Caco-2 (cell line): ENCODE measurements at regions of chr3 and their contacts with region 1.

Region 1: GRCh38 chr3:124351430-124352148 is 359.7 kb upstream of the ROPN1 start:
- DNase-seq: peak; percentile 74 to 77
- H3K4me3 ChIP-seq: no peak overlapping the region
- H3K4me3 Mint-ChIP-seq: no peak overlapping the region
- H3K27ac Mint-ChIP-seq: peak overlapping the region; percentile 50
- H3K4me1 ChIP-seq: peaks cover 18% of the 10 kb centered on the region
- H3K4me1 Mint-ChIP-seq: peaks cover 24% of the 10 kb centered on the region
- H3K27me3 ChIP-seq: no peaks in the 10 kb centered on the region
- H3K27me3 Mint-ChIP-seq: no peaks in the 10 kb centered on the region
- CTCF ChIP-seq: peak; percentile 52 to 59

Region 2: GRCh38 chr3:124322309-124322880 is 29.2 kb before region 1 on chr3:
- CTCF ChIA-PET with region 1: no interaction called
- POLR2A ChIA-PET with region 1: no interaction called
- intact Hi-C with region 1: loop called (anchors 2 kb)
- DNase-seq: no peak
- H3K4me3 ChIP-seq: no peak overlapping the region
- H3K4me3 Mint-ChIP-seq: no peak overlapping the region
- H3K27ac Mint-ChIP-seq: no peak overlapping the region
- H3K4me1 ChIP-seq: 0 out of 2 replicates have a peak, but pooled peaks cover 3% of the 10 kb centered on the region
- H3K4me1 Mint-ChIP-seq: no peaks in the 10 kb centered on the region
- H3K27me3 ChIP-seq: no peaks in the 10 kb centered on the region
- H3K27me3 Mint-ChIP-seq: peaks cover 3% of the 10 kb centered on the region
- CTCF ChIP-seq: no peak

Region 3: DNA sequence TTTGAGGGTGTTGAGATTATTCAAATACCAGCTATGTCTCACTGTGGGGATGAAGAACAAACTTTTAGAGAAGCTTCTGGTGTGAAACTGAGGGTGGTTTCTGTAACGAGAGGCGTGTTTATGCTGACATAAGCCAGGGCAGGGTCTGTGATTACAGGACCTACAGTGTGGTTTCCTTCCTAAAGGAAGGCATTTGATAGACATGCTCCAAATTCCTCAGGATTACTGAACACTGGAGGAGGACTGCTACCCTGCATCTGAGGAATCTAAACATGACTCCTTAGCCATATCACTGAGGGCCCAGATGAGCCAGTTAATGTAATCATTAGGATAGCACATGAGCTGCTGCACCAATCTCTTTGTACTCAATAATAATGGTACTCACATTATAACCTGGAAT is 50.3 kb after region 1 on chr3:
- CTCF ChIA-PET with region 1: interaction called, 3 read pairs
- POLR2A ChIA-PET with region 1: no interaction called
- intact Hi-C with region 1: loop called (anchors 5 kb)
- DNase-seq: peak in 1 of 2 experiments; percentile 25
- H3K4me3 ChIP-seq: no peak overlapping the region
- H3K4me3 Mint-ChIP-seq: no peak overlapping the region
- H3K27ac Mint-ChIP-seq: no peak overlapping the region
- H3K4me1 ChIP-seq: peaks cover 10% of the 10 kb centered on the region
- H3K4me1 Mint-ChIP-seq: peaks cover 13% of the 10 kb centered on the region
- H3K27me3 ChIP-seq: no peaks in the 10 kb centered on the region
- H3K27me3 Mint-ChIP-seq: no peaks in the 10 kb centered on the region
- CTCF ChIP-seq: no peak

Region 4: GRCh38 chr3:124429129-124429815 is 77.7 kb after region 1 on chr3:
- CTCF ChIA-PET with region 1: interaction called, 14 read pairs
- POLR2A ChIA-PET with region 1: no interaction called
- intact Hi-C with region 1: loop called (anchors 1 kb)
- DNase-seq: no peak
- H3K4me3 ChIP-seq: no peak overlapping the region
- H3K4me3 Mint-ChIP-seq: no peak overlapping the region
- H3K27ac Mint-ChIP-seq: no peak overlapping the region
- H3K4me1 ChIP-seq: no peaks in the 10 kb centered on the region; the same call in 1 of the 2 replicates
- H3K4me1 Mint-ChIP-seq: no peaks in the 10 kb centered on the region
- H3K27me3 ChIP-seq: no peaks in the 10 kb centered on the region
- H3K27me3 Mint-ChIP-seq: peaks cover 9% of the 10 kb centered on the region
- CTCF ChIP-seq: no peak

Region 5: GRCh38 chr3:124463241-124463640 is 111.7 kb after region 1 on chr3:
- CTCF ChIA-PET with region 1: interaction called, 25 read pairs
- POLR2A ChIA-PET with region 1: no interaction called
- intact Hi-C with region 1: loop called (anchors 1 kb)
- DNase-seq: no peak
- H3K4me3 ChIP-seq: no peak overlapping the region
- H3K4me3 Mint-ChIP-seq: no peak overlapping the region
- H3K27ac Mint-ChIP-seq: no peak overlapping the region
- H3K4me1 ChIP-seq: peaks cover 4% of the 10 kb centered on the region; the same call in 1 of the 2 replicates
- H3K4me1 Mint-ChIP-seq: peaks cover 7% of the 10 kb centered on the region
- H3K27me3 ChIP-seq: no peaks in the 10 kb centered on the region
- H3K27me3 Mint-ChIP-seq: peaks cover 7% of the 10 kb centered on the region
- CTCF ChIP-seq: no peak

Region 6: DNA sequence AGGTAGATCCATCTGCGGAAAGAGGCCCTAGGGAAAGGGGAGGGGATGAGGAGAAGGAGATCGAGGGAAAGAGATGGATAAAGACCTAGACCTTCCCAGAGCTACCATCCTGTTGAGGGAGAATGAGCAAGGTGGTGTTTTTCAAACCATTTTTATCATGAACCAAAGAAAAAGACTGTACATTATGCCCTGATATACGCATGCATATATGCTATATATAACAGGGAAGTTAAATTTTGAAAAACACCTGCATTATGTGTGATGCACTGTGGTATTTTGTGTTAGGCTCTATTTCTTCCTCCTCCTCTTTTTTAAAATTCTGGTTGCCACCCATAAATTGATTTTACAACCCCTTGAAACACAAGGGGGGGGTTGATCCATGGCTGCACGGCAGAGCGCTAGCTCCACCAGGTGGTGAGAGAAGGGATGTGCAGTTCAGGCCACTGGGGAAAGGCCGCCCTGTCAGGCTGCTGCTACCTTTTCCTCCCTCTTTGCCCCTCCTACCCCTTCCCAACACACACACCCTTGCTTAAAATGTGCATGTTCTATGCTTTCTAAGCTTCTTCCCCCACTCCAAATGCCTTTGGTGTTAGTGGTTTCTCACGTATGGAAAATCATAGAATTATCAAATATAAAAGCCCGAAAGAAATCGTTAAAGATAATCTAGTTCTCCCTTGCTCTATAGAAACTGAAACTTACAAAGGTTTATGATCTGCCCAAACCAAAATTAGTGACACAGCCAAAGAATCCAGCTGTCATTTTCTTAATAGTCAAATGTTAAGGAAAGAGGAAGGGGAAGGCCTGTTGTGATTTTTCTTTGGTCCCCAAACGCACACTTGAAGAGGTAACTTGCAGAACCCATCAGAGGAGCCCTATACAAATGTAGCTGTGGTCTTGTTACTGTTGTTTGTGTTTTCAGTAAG is 116.7 kb after region 1 on chr3:
- CTCF ChIA-PET with region 1: interaction called, 25 read pairs
- POLR2A ChIA-PET with region 1: no interaction called
- intact Hi-C with region 1: loop called (anchors 1 kb)
- DNase-seq: peak; percentile 55 to 76
- H3K4me3 ChIP-seq: no peak overlapping the region
- H3K4me3 Mint-ChIP-seq: no peak overlapping the region
- H3K27ac Mint-ChIP-seq: no peak overlapping the region
- H3K4me1 ChIP-seq: peaks cover 7% of the 10 kb centered on the region; the same call in 1 of the 2 replicates
- H3K4me1 Mint-ChIP-seq: peaks cover 7% of the 10 kb centered on the region
- H3K27me3 ChIP-seq: no peaks in the 10 kb centered on the region
- H3K27me3 Mint-ChIP-seq: peaks cover 4% of the 10 kb centered on the region
- CTCF ChIP-seq: peak; percentile 97 to 98

Region 7: GRCh38 chr3:124552239-124552638 is 200.7 kb after region 1 on chr3:
- CTCF ChIA-PET with region 1: interaction called, 7 read pairs
- POLR2A ChIA-PET with region 1: no interaction called
- intact Hi-C with region 1: loop called (anchors 2 kb)
- DNase-seq: no peak
- H3K4me3 ChIP-seq: no peak overlapping the region
- H3K4me3 Mint-ChIP-seq: no peak overlapping the region
- H3K27ac Mint-ChIP-seq: no peak overlapping the region
- H3K4me1 ChIP-seq: no peaks in the 10 kb centered on the region
- H3K4me1 Mint-ChIP-seq: no peaks in the 10 kb centered on the region
- H3K27me3 ChIP-seq: no peaks in the 10 kb centered on the region
- H3K27me3 Mint-ChIP-seq: peaks cover 4% of the 10 kb centered on the region
- CTCF ChIP-seq: no peak

Region 8: GRCh38 chr3:124761250-124761796 is 409.7 kb after region 1 on chr3:
- CTCF ChIA-PET with region 1: no interaction called
- POLR2A ChIA-PET with region 1: no interaction called
- intact Hi-C with region 1: no loop called
- DNase-seq: peak; percentile 75 to 80
- H3K4me3 ChIP-seq: no peak overlapping the region
- H3K4me3 Mint-ChIP-seq: peak overlapping the region; percentile 38
- H3K27ac Mint-ChIP-seq: peak overlapping the region; percentile 44
- H3K4me1 ChIP-seq: peaks cover 9% of the 10 kb centered on the region
- H3K4me1 Mint-ChIP-seq: peaks cover 21% of the 10 kb centered on the region
- H3K27me3 ChIP-seq: no peaks in the 10 kb centered on the region
- H3K27me3 Mint-ChIP-seq: no peaks in the 10 kb centered on the region
- CTCF ChIP-seq: peak; percentile 92 to 94

Region 9: GRCh38 chr3:125087768-125088391 is 736.3 kb after region 1 on chr3:
- CTCF ChIA-PET with region 1: no interaction called
- POLR2A ChIA-PET with region 1: no interaction called
- intact Hi-C with region 1: no loop called
- DNase-seq: no peak
- H3K4me3 ChIP-seq: no peak overlapping the region
- H3K4me3 Mint-ChIP-seq: no peak overlapping the region
- H3K27ac Mint-ChIP-seq: no peak overlapping the region
- H3K4me1 ChIP-seq: no peaks in the 10 kb centered on the region
- H3K4me1 Mint-ChIP-seq: no peaks in the 10 kb centered on the region
- H3K27me3 ChIP-seq: no peaks in the 10 kb centered on the region
- H3K27me3 Mint-ChIP-seq: no peaks in the 10 kb centered on the region
- CTCF ChIP-seq: no peak